IMR-90 (cell line): ENCODE measurements at regions of chr2 and their contacts with region 1.

Region 1: DNA sequence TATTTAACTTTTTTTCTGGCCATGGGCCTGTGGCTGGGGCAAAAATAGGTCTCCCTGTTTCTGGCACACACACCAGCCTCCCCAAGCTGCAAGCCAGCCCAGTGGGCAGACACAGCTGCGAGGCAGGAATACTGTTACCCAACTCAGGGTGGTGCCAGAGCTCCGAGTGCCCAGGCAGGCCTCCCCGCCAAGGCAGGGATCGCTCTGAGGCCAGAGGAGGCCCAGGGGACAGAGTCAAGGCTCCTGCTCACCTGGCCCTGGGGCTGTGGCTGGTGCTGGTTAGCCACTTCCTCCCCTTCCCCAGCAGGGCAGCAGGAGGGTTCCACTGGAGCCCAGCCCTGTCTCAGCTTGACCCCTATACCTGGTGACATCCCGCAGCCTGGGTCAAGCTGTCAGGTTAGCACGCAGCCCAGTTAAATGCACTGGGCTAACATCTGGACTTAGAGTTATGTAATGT is 67.1 kb upstream of the EPAS1 start:
- DNase-seq: no peak
- ATAC-seq: no peak
- H3K4me3 ChIP-seq: no peak overlapping the region
- H3K27ac ChIP-seq: no peak overlapping the region
- H3K4me1 ChIP-seq: peaks cover 2% of the 10 kb centered on the region; the same call in 1 of the 2 replicates
- H3K27me3 ChIP-seq: peaks cover 32% of the 10 kb centered on the region
- CTCF ChIP-seq: no peak
- POLR2A ChIP-seq: no peak
- RAD21 ChIP-seq: no peak

Region 2: GRCh38 chr2:46216257-46216656 is 13.9 kb before region 1 on chr2:
- CTCF ChIA-PET with region 1: no interaction called
- POLR2A ChIA-PET with region 1: no interaction called
- dilution Hi-C with region 1: no loop called
- in situ Hi-C with region 1: no loop called
- intact Hi-C with region 1: loop called (anchors 1 kb)
- DNase-seq: peak; percentile 79
- ATAC-seq: peak; percentile 75
- H3K4me3 ChIP-seq: no peak overlapping the region
- H3K27ac ChIP-seq: no peak overlapping the region
- H3K4me1 ChIP-seq: peaks cover 6% of the 10 kb centered on the region
- H3K27me3 ChIP-seq: no peaks in the 10 kb centered on the region; the same call in 1 of the 2 replicates
- CTCF ChIP-seq: no peak
- POLR2A ChIP-seq: no peak
- RAD21 ChIP-seq: no peak